Adrenal gland (tissue), 19 donors: ENCODE measurements at regions of chr1 and their contacts with region 1.

Region 1: GRCh38 chr1:43073490-43074230 is 98.4 kb downstream of the EBNA1BP2 start:
- DNase-seq: peak; percentile 69 to 91 (median 77)
- H3K4me3 ChIP-seq: no peak overlapping the region
- H3K27ac ChIP-seq: no peak overlapping the region
- H3K4me1 ChIP-seq: no peaks in the 10 kb centered on the region
- H3K27me3 ChIP-seq: no peaks in the 10 kb centered on the region
- CTCF ChIP-seq: peak; percentile 84 to 96 (median 92)
- POLR2A ChIP-seq: no peak

Region 2: GRCh38 chr1:42576935-42577334 is 496.7 kb before region 1 on chr1:
- intact Hi-C with region 1: loop called in 1 of 2 experiments (anchors 5 kb)
- DNase-seq: no peak
- H3K4me3 ChIP-seq: no peak overlapping the region
- H3K27ac ChIP-seq: no peak overlapping the region
- H3K4me1 ChIP-seq: no peaks in the 10 kb centered on the region
- H3K27me3 ChIP-seq: no peaks in the 10 kb centered on the region
- CTCF ChIP-seq: no peak
- POLR2A ChIP-seq: no peak

Region 3: GRCh38 chr1:42777852-42778251 is 295.8 kb before region 1 on chr1:
- intact Hi-C with region 1: loop called in 1 of 2 experiments (anchors 5 kb)
- DNase-seq: peak in 3 of 7 donors; percentile 25 to 46 (median 38)
- H3K4me3 ChIP-seq: no peak overlapping the region
- H3K27ac ChIP-seq: no peak overlapping the region
- H3K4me1 ChIP-seq: no peaks in the 10 kb centered on the region
- H3K27me3 ChIP-seq: no peaks in the 10 kb centered on the region
- CTCF ChIP-seq: peak; percentile 34 to 75 (median 61)
- POLR2A ChIP-seq: no peak

Region 4: DNA sequence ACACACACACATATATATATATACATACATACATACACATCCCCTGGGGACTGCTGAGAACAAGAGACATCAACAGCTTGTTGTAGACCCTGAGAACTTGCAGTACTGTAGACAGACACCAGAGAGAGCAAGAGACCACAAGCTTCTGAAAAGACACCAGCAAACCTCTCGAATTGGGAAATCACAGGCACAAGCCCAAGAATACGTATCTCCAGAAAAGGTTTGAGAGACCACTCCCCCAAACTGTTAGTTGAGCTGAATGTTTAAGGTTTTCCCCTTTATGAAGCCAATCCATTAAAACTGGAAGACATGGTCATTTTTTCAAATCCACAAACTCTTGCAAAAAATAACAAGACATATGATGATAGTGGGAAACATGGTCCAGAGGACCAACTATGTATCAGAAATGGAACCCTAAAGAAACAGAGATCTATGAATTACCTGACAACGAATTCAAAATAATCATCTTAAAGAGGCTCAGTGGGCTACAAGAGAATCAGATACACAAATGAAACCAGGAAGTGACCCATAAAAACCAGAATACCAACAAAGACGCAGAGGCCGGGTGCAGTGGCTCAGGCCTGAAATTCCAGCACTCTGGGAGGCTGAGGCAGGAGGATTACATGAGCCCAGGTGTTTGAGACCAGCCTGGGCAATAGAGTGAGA is 160.1 kb before region 1 on chr1:
- intact Hi-C with region 1: loop called (anchors 5 kb)
- DNase-seq: peak in 6 of 7 donors; percentile 42 to 81 (median 67)
- H3K4me3 ChIP-seq: no peak overlapping the region
- H3K27ac ChIP-seq: no peak overlapping the region
- H3K4me1 ChIP-seq: no peaks in the 10 kb centered on the region
- H3K27me3 ChIP-seq: no peaks in the 10 kb centered on the region
- CTCF ChIP-seq: peak; percentile 54 to 94 (median 84)
- POLR2A ChIP-seq: no peak

Region 5: DNA sequence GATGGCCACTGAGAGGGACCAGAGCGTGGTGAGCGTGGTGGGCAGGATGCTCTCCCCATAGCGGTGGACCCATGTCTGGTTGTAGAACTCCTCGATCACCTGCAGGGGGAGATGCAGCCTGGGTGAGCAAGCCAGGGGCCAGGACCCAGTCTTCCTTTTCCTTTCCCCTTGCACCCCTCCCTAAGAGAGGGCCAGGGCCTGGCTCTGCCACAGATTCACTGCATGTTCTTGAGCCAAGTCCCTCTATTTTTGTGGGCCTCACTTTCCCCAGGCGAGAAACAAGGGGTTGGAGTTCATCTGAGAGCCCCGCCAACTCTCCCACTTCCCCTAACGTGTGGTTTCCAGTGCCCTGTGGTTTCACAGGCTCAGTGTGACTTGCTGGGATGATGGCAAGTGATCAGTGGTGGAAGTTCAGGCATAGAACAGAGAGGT is 142.5 kb before region 1 on chr1:
- intact Hi-C with region 1: loop called in 1 of 2 experiments (anchors 5 kb)
- DNase-seq: peak in 2 of 7 donors; percentile 23 to 54
- H3K4me3 ChIP-seq: no peak overlapping the region
- H3K27ac ChIP-seq: no peak overlapping the region
- H3K4me1 ChIP-seq: peaks cover 0 to under 1% of the 10 kb centered on the region in 2 donors
- H3K27me3 ChIP-seq: no peaks in the 10 kb centered on the region
- CTCF ChIP-seq: peak in 5 of 6 experiments; percentile 34 to 53 (median 41)
- POLR2A ChIP-seq: no peak